ENCODE measurements at regions of chr22 and their contacts with region 1.

Region 1: GRCh38 chr22:22855617-22856308 is 31.9 kb upstream of the IGLL5 start:
- DNase-seq: peak; percentile 45
- H3K4me3 ChIP-seq: no peak overlapping the region
- H3K27ac ChIP-seq: no peak overlapping the region
- H3K4me1 ChIP-seq: no peaks in the 10 kb centered on the region
- H3K27me3 ChIP-seq: peaks cover 45% of the 10 kb centered on the region
- CTCF ChIP-seq: peak; percentile 60

Region 2: GRCh38 chr22:23128269-23129108 is 272.7 kb after region 1 on chr22:
- CTCF ChIA-PET with region 1: no interaction called
- POLR2A ChIA-PET with region 1: no interaction called
- intact Hi-C with region 1: loop called (anchors 10 kb)
- DNase-seq: peak; percentile 82
- H3K4me3 ChIP-seq: no peak overlapping the region
- H3K27ac ChIP-seq: no peak overlapping the region
- H3K4me1 ChIP-seq: no peaks in the 10 kb centered on the region
- H3K27me3 ChIP-seq: no peaks in the 10 kb centered on the region
- CTCF ChIP-seq: peak; percentile 84

Region 3: GRCh38 chr22:23163665-23164064 is 307.9 kb after region 1 on chr22:
- CTCF ChIA-PET with region 1: no interaction called
- POLR2A ChIA-PET with region 1: no interaction called
- intact Hi-C with region 1: no loop called
- DNase-seq: no peak
- H3K4me3 ChIP-seq: no peak overlapping the region
- H3K27ac ChIP-seq: no peak overlapping the region
- H3K4me1 ChIP-seq: no peaks in the 10 kb centered on the region
- H3K27me3 ChIP-seq: no peaks in the 10 kb centered on the region
- CTCF ChIP-seq: no peak